ENCODE measurements at regions of chr16 and their contacts with region 1.

Region 1: DNA sequence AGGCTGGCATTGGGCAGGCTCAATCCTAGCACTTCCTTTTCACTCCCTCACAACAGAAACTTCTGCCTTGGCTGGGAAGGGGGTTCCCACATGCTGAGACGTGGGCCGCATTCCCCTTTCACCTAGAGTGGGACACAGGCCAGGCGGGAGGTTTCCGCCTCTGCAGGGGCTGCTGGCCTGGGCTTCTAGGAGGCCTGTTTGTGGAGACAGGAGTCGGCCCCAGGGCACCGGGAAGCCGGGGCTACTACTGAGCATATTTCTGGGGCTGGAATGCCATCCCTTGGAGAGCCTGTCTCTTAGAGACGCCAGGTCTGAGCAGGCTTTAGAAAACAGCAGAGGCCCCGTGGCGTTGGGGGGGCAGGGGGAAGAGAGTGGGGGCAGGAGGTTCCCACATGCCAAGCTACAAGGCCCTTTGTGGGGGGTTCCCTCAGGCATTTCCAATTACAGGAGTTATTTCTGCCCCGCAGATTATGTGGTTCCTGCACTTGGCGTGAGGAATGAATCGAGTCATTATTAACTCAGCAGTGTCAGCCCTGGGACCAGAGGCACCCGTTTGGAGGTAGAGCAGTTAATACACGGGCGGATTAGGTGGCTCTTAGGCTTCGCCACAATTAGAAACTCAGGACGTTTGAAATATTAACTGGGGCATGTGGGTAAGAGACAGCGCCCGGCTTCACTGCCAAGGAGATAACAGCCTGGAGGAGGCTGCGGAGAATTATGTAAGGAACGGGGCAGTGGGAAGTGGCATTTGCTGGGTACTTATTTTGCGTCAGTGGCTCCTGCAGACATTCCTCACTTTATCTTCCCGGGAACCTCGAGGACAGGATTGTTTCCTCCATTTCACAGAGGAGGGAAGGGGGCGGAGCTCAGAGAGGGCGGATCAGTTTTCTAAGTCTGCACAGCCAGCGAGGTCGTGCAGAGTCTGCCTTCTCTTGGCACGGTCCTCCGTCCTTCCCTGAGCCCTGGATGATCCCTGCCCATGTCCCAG is 162.5 kb downstream of the MAF start:
- DNase-seq: peak; percentile 74
- ATAC-seq: peak; percentile 75

Region 2: GRCh38 chr16:78396046-78396445 is 1042.0 kb before region 1 on chr16:
- intact Hi-C with region 1: no loop called
- DNase-seq: no peak
- ATAC-seq: no peak

Region 3: GRCh38 chr16:79415983-79416640 is 21.9 kb before region 1 on chr16:
- intact Hi-C with region 1: no loop called
- DNase-seq: no peak
- ATAC-seq: no peak

Region 4: DNA sequence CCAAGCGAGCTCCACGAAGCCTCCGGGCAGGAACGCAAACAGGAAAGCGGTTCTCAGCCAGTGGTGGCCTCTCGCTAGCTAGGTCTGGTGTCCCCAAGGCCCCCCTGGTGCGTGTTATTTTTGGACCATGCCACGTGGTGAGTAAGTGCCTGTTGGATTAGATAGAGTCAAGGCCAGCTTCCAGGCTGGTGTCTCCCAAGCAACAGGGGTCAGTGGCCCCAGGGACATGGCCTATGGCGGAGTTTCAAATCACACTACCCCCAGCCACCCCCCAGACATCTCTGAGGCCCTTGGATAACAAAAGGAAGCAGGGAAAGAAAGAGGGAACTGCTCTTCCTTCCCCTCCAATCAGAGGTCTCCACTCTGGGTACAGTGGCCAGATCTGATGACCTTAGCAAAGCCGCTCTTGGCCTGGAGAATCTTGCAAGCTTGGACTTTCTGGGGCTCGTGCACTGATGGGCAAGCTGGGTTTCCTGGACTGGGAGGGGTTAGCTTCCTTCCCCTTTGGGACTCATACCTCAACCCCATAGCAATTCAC is 104.2 kb after region 1 on chr16:
- intact Hi-C with region 1: loop called (anchors 5 kb)
- DNase-seq: peak; percentile 77
- ATAC-seq: peak; percentile 89